Psoas muscle (tissue), 8 donors: ENCODE measurements at regions of chr2 and their contacts with region 1.

Region 1: GRCh38 chr2:64488050-64488974 is 34.4 kb downstream of the LGALSL start:
- DNase-seq: peak; percentile 44 to 79
- ATAC-seq: peak; percentile 75 to 92 (median 83)
- H3K4me3 ChIP-seq: no peak overlapping the region
- H3K27ac ChIP-seq: no peak overlapping the region
- H3K4me1 ChIP-seq: peaks cover 8% of the 10 kb centered on the region
- H3K27me3 ChIP-seq: no peaks in the 10 kb centered on the region
- CTCF ChIP-seq: peak; percentile 96

Region 2: DNA sequence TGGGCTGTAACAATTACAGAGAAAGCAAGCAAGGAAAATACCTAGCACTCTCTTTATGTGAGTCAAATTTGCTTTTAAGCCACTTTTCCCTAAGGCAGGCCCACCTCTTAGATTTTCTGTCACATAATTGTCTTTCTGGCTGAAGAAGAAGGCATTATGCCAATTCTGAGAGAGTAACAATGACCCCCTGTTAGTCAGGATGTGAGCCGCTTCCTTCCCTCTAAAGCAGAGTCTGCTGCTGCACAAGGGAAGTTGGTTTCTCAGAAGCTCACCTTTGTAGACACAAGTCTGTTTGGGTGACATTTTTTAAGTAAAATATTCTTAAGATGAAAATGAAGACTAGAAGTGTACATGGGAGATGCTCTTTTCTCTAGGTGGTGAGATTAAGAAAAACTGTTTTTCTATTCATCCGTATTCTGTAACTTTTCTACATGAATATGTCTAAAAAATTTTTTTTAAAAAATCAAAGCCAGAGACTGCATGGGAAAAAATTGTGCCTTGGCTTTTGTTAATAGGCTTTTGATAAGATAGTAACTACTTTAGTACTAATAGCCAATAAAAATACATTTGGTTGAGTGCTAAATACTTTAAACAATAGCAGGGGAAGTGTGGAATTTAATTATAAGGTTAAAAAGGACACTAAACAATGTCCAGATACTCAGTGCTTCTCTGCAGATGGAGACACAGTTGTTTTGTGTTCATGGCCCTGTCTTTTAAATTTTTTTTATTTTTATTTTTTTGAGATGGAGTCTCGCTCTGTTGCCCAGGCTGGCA is 435.7 kb before region 1 on chr2:
- intact Hi-C with region 1: loop called (anchors 1 to 10 kb)
- DNase-seq: no peak
- ATAC-seq: no peak
- H3K4me3 ChIP-seq: no peak overlapping the region
- H3K27ac ChIP-seq: peak overlapping the region; percentile 46
- H3K4me1 ChIP-seq: no peaks in the 10 kb centered on the region
- H3K27me3 ChIP-seq: no peaks in the 10 kb centered on the region
- CTCF ChIP-seq: no peak

Region 3: DNA sequence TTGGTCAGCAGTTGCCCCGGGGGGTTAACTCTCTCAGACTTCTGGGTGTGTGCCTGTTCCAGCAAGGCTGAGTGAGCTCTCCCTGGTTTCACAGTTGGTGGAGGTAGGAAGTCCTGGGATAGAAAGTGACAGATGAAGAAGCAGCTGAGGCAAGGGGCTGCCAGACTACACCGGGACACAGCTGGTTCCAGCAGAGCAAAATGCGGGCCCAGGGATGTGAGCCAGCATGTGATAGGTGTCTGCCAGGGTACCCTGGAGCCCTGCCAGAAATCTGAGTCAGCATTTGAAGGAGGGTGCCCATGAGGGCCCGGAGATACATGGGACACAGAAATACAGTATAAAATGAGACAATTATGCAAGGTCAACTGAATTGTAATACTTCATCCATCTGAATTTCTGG is 113.6 kb before region 1 on chr2:
- intact Hi-C with region 1: no loop called
- DNase-seq: peak; percentile 33 to 53
- ATAC-seq: peak; percentile 55 to 86 (median 74)
- H3K4me3 ChIP-seq: no peak overlapping the region
- H3K27ac ChIP-seq: no peak overlapping the region
- H3K4me1 ChIP-seq: peaks cover 9% of the 10 kb centered on the region
- H3K27me3 ChIP-seq: no peaks in the 10 kb centered on the region
- CTCF ChIP-seq: no peak

Region 4: DNA sequence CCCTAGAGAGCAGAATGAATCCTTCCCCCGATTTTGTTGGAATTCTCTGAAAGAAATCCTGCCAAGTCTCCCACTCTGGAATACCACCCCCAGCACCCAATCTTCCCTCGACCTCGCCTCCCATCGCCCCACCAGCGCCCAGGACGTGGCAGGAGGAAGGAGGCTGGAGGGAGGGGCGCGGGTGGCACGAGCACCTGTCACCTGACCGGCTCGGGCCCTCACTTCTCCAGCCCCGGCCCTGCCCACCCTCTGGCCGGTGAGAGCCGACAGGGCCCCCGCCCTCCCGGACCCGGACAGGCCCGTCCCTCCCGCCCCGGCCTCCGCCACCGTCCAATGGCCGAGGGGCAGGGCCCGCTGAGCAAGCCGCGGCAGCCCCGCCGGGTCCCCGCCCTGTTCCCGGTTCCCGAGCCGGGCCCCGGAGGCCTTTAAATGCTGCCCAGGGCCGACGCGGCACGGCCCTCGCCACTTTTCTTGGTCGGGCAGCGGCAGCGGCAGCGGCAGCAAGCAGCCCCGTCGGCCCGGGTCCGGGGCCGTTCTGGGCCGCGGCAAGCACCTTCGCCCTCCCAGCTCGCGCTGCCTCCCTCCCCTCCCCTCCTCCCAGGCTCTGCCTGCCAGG is 34.4 kb before region 1 on chr2 and contains the start of gene LGALSL:
- intact Hi-C with region 1: no loop called
- DNase-seq: peak; percentile 80 to 81
- ATAC-seq: peak; percentile 78 to 86 (median 83)
- H3K4me3 ChIP-seq: peak within 1 kb of the TSS; percentile 91
- H3K27ac ChIP-seq: peak within 1 kb of the TSS; percentile 94
- H3K4me1 ChIP-seq: peaks cover 54% of the 10 kb centered on the region
- H3K27me3 ChIP-seq: no peaks in the 10 kb centered on the region
- CTCF ChIP-seq: no peak
- total RNA-seq, gene LGALSL: 11.4 to 30.9 (median 23.2) TPM

Region 5: GRCh38 chr2:64523666-64524603 is 35.6 kb after region 1 on chr2 and contains the start of gene AFTPH:
- intact Hi-C with region 1: no loop called
- DNase-seq: peak; percentile 99
- ATAC-seq: peak; percentile 99 to 100 (median 100)
- H3K4me3 ChIP-seq: peak within 1 kb of the TSS; percentile 97
- H3K27ac ChIP-seq: peak within 1 kb of the TSS; percentile 97
- H3K4me1 ChIP-seq: peaks cover 20% of the 10 kb centered on the region
- H3K27me3 ChIP-seq: no peaks in the 10 kb centered on the region
- CTCF ChIP-seq: peak; percentile 10
- total RNA-seq, gene AFTPH: 12.2 to 15.6 (median 13.0) TPM

Region 6: DNA sequence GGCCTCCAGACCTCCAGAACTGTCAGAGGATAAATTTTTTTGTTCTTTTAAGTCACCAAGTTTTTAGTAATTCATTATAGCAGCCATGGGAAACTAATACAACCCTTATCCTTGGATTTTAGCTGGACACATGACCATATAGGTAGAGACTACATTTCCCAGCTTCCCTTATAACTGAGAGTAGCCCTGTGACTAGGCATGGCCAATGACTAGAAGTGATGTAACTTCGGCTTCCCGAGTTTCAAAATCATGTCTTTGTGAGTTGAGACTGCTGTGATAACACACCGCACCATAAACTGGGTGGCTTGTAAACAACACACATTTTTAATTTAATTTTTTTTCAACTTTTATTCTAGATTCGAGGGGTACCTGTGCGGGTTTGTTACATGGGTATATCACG is 299.4 kb after region 1 on chr2:
- intact Hi-C with region 1: no loop called
- DNase-seq: no peak
- ATAC-seq: peak in 2 of 4 donors; percentile 49 to 59
- H3K4me3 ChIP-seq: no peak overlapping the region
- H3K27ac ChIP-seq: no peak overlapping the region
- H3K4me1 ChIP-seq: no peaks in the 10 kb centered on the region
- H3K27me3 ChIP-seq: no peaks in the 10 kb centered on the region
- CTCF ChIP-seq: no peak